ENCODE measurements at regions of chr3 and their contacts with region 1.

Region 1: DNA sequence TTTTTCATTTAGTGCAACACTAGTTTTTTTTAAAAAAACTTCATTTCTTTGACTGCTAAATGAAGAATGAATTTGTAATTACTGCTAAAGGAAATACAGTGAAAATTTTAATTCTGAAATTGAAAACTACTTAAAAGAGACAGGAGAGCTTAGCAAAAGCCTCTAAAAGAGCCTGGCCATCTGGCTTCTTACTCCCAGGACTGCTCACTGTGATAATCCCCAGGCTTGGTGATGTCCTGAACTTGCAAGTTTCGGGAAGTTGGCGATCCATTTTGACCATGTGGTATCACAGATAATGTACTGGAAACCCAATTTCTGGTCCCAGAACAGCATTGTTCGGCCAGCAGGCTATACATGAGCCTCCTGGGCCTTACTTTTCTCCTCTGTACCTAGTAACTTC is 292.1 kb downstream of the FGF12 start:
- DNase-seq: no peak
- H3K4me3 ChIP-seq: no peak overlapping the region
- CTCF ChIP-seq: no peak

Region 2: DNA sequence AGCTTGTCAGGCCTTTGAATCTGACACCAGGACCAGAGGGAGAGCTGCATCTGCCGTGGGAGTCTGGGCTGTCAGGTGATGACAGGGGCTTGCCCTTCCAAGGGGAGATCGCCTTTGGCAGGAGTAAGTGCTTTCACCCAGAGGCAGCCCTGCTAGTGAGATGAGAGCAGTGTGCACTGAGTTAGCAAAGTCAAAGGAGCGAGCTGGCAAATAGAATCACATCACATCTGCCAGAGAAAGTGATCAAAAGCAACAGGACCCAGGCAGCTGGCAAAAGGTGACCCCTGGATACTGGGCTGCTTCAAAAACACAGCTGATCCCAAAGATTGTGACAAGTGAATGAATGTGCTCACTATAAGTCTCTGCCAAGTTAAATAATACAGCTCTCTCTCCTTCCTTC is 1010.4 kb before region 1 on chr3:
- in situ Hi-C with region 1: loop called (anchors 5 kb)
- DNase-seq: no peak
- H3K4me3 ChIP-seq: no peak overlapping the region
- CTCF ChIP-seq: no peak

Region 3: GRCh38 chr3:192054881-192055280 is 380.4 kb before region 1 on chr3:
- in situ Hi-C with region 1: no loop called
- DNase-seq: peak; percentile 29
- H3K4me3 ChIP-seq: no peak overlapping the region
- CTCF ChIP-seq: no peak

Region 4: GRCh38 chr3:192395506-192395905 is 39.7 kb before region 1 on chr3:
- in situ Hi-C with region 1: no loop called
- DNase-seq: no peak
- H3K4me3 ChIP-seq: no peak overlapping the region
- CTCF ChIP-seq: no peak

Measured in astrocyte of the cerebellum (primary cell).